PC-3 (cell line): ENCODE measurements at regions of chr3 and their contacts with region 1.

Region 1: DNA sequence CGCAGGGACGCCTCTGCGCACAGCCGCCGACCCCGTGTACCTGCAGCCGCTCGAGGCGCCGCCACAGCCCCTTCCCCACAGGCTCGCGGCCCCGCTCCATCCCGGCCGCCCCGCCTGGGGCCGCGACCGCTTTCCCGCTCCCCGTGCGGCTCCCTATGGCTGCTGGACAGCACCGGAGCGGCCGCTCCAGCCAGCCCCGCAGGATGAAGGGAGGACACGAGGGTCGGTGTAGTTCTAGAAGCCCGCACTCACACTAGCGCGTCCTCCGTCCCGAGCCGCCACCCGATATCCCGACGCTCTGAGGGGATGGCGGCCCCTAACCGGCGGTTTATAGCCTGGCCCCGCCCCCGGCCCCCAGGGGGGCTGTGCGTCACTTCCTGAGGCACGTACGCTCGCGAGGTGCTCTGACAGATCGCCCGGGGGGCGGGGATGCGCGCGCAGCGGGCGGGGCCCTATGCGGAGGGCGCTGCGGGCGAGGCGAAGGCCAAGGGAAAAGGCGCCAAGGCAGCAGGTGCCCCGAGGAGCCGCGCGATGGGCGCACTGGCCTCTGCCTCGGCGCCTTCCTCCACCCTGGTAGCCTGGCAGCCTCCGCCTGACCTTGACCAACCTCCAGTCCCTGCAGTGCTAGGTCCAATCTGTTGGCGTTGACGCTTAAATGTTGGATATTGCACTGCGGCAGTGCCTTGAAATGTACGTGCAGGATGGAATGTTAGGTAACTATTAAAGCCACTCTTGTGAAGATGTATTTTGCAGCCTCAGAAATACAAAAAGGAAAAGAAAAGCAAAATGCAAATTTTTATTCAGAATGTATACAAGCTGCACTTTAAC is at the start of gene TFRC:
- DNase-seq: peak; percentile 98
- ATAC-seq: peak; percentile 80
- H3K4me3 ChIP-seq: peak within 1 kb of the TSS; percentile 97
- H3K27ac ChIP-seq: peak within 1 kb of the TSS; percentile 61
- H3K4me1 ChIP-seq: peaks cover 22% of the 10 kb centered on the region
- H3K27me3 ChIP-seq: no peaks in the 10 kb centered on the region
- CTCF ChIP-seq: no peak
- total RNA-seq, gene TFRC: 272 and 287 TPM in 2 replicates

Region 2: DNA sequence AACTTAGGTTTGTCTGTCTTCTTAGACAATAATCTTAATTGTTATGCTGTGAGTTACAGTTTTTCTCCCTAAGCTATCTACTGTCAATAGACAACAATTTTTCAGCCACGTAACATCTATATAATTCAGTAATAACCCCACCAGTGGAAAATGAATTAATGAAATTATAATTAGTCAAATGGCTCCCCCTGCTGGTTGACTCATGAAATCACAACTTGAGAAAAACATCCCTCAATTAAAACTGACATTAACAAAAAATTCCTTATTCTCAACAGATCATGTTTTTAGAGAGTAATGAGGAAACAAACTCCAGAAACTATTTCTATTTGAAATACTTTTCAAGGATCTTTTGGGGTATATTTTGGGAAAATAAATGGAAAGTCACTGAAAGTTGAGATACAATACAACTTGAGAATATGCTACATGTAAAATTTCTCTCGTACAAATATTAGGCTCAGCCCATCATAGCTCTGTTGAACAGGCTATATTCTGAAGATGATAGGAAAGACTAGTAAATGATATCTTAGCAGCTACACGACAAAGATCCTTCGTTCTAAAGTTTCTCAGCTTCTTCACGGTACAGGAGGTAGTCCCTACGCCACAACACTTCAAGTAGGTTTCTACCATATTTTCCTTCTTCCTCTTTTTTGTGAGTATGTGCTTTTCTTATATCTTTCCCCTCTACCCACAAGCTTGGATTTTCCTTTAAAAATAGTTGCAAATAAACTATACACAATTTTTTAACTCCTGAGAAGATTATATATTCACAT is 559.6 kb before region 1 on chr3:
- CTCF ChIA-PET with region 1: no interaction called
- POLR2A ChIA-PET with region 1: no interaction called
- intact Hi-C with region 1: no loop called
- DNase-seq: peak; percentile 57
- ATAC-seq: no peak
- H3K4me3 ChIP-seq: no peak overlapping the region
- H3K27ac ChIP-seq: no peak overlapping the region
- H3K4me1 ChIP-seq: peaks cover 23% of the 10 kb centered on the region
- H3K27me3 ChIP-seq: no peaks in the 10 kb centered on the region
- CTCF ChIP-seq: peak; percentile 91

Region 3: DNA sequence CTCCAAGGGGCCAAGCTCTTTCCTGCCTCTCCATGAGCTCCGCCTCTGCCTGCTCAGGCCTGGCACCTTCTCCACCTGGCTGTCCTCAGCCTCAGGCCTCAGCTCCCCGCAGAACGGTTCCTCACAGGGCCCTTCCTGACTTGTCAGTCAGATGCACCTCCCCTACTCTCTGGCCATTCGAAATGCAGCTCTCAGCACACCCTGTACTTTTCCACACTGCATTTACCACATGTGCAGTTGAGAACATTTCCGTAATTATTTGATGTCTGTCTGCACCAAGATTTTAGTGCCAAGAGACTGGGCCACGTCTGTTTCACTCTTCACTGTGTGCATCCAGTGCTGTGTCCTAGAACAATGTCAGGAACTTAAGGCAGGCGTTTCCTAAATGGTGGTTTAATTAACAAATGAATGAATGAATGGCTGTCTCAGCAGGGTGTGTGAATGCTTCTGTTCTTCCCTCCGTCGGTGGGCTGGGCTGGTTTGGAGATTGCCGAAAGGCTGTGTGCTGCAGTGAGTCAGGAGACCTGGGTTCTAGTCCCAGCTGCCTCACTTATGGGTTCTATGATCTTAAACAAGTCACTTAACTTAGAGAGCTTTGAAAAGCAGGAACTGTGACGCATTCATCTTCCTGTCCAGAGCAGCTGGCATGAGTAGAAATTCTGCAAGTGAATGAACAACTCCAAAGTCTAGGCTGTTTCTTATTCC is 275.6 kb before region 1 on chr3:
- CTCF ChIA-PET with region 1: no interaction called
- POLR2A ChIA-PET with region 1: no interaction called
- intact Hi-C with region 1: no loop called
- DNase-seq: no peak
- ATAC-seq: no peak
- H3K4me3 ChIP-seq: no peak overlapping the region
- H3K27ac ChIP-seq: no peak overlapping the region
- H3K4me1 ChIP-seq: peaks cover 8% of the 10 kb centered on the region; the same call in 1 of the 2 replicates
- H3K27me3 ChIP-seq: peaks cover 6% of the 10 kb centered on the region; the same call in 1 of the 2 replicates
- CTCF ChIP-seq: no peak

Region 4: GRCh38 chr3:196159952-196160804 is 78.2 kb after region 1 on chr3:
- CTCF ChIA-PET with region 1: no interaction called
- POLR2A ChIA-PET with region 1: no interaction called
- intact Hi-C with region 1: loop called (anchors 1 kb)
- DNase-seq: peak; percentile 87
- ATAC-seq: peak; percentile 93
- H3K4me3 ChIP-seq: no peak overlapping the region
- H3K27ac ChIP-seq: peak overlapping the region; percentile 38
- H3K4me1 ChIP-seq: peaks cover 13% of the 10 kb centered on the region
- H3K27me3 ChIP-seq: no peaks in the 10 kb centered on the region
- CTCF ChIP-seq: no peak